Activated naive CD4-positive, alpha-beta T cell treated with anti-CD3 and anti-CD28 coated beads for 36 hours (primary cell): ENCODE measurements at regions of chr21 and their contacts with region 1.

Region 1: GRCh38 chr21:14382835-14383594 is at the start of gene HSPA13:
- DNase-seq: peak; percentile 100
- H3K4me3 Mint-ChIP-seq: peak within 1 kb of the TSS; percentile 100
- H3K27ac Mint-ChIP-seq: peak within 1 kb of the TSS; percentile 100
- H3K4me1 Mint-ChIP-seq: peaks cover 24% of the 10 kb centered on the region
- H3K27me3 Mint-ChIP-seq: no peaks in the 10 kb centered on the region
- total RNA-seq, gene HSPA13: 41.1 to 41.4 TPM

Region 2: GRCh38 chr21:14086553-14086952 is 296.5 kb before region 1 on chr21:
- CTCF ChIA-PET with region 1: no interaction called
- intact Hi-C with region 1: loop called (anchors 2 kb)
- DNase-seq: peak; percentile 49
- H3K4me3 Mint-ChIP-seq: no peak overlapping the region
- H3K27ac Mint-ChIP-seq: peak overlapping the region; percentile 70
- H3K4me1 Mint-ChIP-seq: peaks cover 29% of the 10 kb centered on the region
- H3K27me3 Mint-ChIP-seq: no peaks in the 10 kb centered on the region

Region 3: DNA sequence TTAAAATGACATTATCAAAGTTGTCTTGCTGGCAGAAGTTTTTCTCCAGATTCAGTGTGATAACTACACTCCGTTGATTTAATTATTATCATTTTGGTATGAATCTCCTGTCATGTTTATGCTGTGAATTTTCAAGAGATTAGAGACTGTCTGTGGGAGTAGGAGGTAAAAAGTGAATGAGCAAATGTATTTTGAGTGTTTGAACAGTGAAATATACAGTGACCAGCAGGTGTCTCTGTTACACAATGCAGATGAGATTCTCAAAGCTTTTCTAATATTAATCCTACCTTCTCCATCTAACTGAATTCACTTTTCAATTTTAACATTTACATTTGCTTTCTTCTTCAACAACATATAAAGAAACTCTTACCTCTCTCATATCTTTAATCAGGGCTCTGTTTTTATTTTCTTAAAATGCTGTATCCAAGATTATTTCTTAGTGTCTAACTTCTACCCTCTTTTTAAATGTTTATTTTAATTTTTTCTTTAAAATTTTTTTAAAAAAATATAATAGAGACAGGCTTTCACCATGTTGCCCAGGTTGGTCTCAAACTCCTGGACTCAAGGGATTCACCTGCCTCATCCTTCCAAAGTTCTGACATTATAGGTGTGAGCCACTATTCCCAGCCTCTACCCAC is 20.8 kb after region 1 on chr21:
- CTCF ChIA-PET with region 1: no interaction called
- intact Hi-C with region 1: no loop called
- DNase-seq: peak; percentile 9
- H3K4me3 Mint-ChIP-seq: no peak overlapping the region
- H3K27ac Mint-ChIP-seq: no peak overlapping the region
- H3K4me1 Mint-ChIP-seq: no peaks in the 10 kb centered on the region
- H3K27me3 Mint-ChIP-seq: no peaks in the 10 kb centered on the region

Region 4: DNA sequence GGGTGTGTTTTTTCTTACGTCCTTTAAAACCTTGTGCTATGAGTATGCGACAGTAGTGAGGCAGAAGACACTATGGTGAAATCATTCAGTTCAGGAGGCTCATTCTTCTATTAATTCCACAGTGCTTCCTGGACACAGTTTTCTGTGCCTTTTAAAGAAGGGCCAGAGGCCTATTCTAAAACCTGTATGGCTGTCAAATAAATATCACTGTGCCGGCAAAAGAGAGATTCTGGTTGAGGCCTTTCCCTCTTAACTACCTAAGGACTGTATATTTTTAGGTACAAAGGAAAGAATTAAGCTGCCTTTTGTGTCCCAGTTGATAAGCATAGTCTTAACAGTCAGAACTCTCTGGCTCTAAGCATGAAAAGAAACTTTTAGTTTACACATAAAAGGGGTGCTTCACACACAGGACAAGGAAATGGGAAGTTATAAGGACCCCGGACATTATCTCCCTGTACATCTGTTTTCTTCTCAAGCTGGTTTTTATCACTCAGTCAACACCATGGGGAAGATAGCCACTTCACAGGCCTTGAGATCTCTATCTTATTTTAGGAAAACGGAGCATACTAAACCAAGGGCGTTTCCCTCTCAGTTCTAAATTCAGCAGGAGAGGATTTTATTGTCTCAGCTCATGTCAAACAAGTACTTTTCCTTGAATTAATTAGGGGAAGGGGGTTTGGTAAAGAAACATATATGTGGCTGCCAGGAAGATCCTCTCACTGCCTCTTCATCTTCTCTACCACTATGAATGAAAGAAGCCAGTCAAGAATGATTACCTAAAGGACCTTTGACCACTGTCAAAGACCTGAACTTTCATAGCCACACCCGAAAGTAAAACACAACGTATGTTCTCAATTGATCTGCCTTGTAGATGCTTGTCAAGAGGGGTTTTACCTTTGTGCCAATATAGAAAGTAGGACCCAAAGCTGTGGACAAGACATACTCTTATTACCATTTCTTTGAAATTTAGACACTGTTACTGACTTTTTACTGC is 71.3 kb after region 1 on chr21:
- CTCF ChIA-PET with region 1: no interaction called
- intact Hi-C with region 1: loop called (anchors 1 kb)
- DNase-seq: no peak
- H3K4me3 Mint-ChIP-seq: no peak overlapping the region
- H3K27ac Mint-ChIP-seq: peak overlapping the region; percentile 88
- H3K4me1 Mint-ChIP-seq: peaks cover 48% of the 10 kb centered on the region
- H3K27me3 Mint-ChIP-seq: peaks cover 2% of the 10 kb centered on the region

Region 5: DNA sequence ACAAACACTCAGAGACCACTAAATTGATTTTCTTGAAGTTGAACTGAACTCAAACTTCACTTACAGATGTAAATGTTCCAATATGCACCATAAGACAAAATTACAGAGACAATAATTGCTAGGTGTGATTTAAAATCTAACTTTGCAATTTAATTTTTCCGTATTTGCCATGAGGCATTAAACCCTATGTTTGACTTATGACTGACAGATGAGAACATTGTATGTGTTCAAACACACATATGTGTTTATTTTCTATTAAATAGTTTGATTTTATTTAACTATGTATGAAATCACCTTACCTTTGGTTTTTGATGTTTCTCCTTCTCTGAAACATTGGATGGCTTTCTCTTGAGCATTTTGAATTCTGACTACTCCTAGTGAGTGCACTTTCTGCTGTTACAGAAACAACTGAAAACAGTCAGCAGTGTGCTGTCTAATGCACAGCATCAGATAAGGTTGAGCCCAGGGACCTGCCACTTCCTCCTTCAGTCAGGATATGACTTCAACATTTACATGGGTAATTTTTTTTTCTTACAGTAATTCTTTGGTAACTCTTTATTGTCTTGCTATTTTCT is 163.0 kb after region 1 on chr21 and contains the start of gene SAMSN1:
- CTCF ChIA-PET with region 1: no interaction called
- intact Hi-C with region 1: loop called (anchors 1 kb)
- DNase-seq: peak; percentile 83
- H3K4me3 Mint-ChIP-seq: peak within 1 kb of the TSS; percentile 88
- H3K27ac Mint-ChIP-seq: peak within 1 kb of the TSS; percentile 92
- H3K4me1 Mint-ChIP-seq: peaks cover 53% of the 10 kb centered on the region
- H3K27me3 Mint-ChIP-seq: no peaks in the 10 kb centered on the region
- total RNA-seq, gene SAMSN1: 41.1 to 43.0 TPM

Region 6: GRCh38 chr21:14630556-14631069 is 247.6 kb after region 1 on chr21:
- CTCF ChIA-PET with region 1: no interaction called
- intact Hi-C with region 1: loop called (anchors 1 kb)
- DNase-seq: no peak
- H3K4me3 Mint-ChIP-seq: no peak overlapping the region
- H3K27ac Mint-ChIP-seq: peak overlapping the region; percentile 65
- H3K4me1 Mint-ChIP-seq: peaks cover 19% of the 10 kb centered on the region
- H3K27me3 Mint-ChIP-seq: no peaks in the 10 kb centered on the region

Region 7: GRCh38 chr21:15015622-15016471 is 632.8 kb after region 1 on chr21:
- CTCF ChIA-PET with region 1: no interaction called
- intact Hi-C with region 1: loop called (anchors 5 kb)
- DNase-seq: no peak
- H3K4me3 Mint-ChIP-seq: no peak overlapping the region
- H3K27ac Mint-ChIP-seq: no peak overlapping the region
- H3K4me1 Mint-ChIP-seq: peaks cover 21% of the 10 kb centered on the region
- H3K27me3 Mint-ChIP-seq: no peaks in the 10 kb centered on the region

Region 8: GRCh38 chr21:15514073-15514946 is 1131.3 kb after region 1 on chr21:
- CTCF ChIA-PET with region 1: no interaction called
- intact Hi-C with region 1: loop called (anchors 2 kb)
- DNase-seq: peak; percentile 72
- H3K4me3 Mint-ChIP-seq: peak overlapping the region; percentile 55
- H3K27ac Mint-ChIP-seq: peak overlapping the region; percentile 85
- H3K4me1 Mint-ChIP-seq: peaks cover 28% of the 10 kb centered on the region
- H3K27me3 Mint-ChIP-seq: no peaks in the 10 kb centered on the region